Panc1 (cell line): ENCODE measurements at regions of chr17 and their contacts with region 1.

Region 1: GRCh38 chr17:21126645-21127510 is at the start of gene DHRS7B:
- DNase-seq: peak; percentile 66
- ATAC-seq: peak; percentile 98
- H3K4me3 ChIP-seq: peak within 1 kb of the TSS; percentile 82
- H3K27ac ChIP-seq: peak within 1 kb of the TSS; percentile 90
- H3K4me1 ChIP-seq: peaks cover 12% of the 10 kb centered on the region
- H3K27me3 ChIP-seq: no peaks in the 10 kb centered on the region
- CTCF ChIP-seq: no peak
- total RNA-seq, gene DHRS7B: 9.4 TPM

Region 2: GRCh38 chr17:20992987-20993862 is 133.7 kb before region 1 on chr17:
- CTCF ChIA-PET with region 1: no interaction called
- POLR2A ChIA-PET with region 1: no interaction called
- in situ Hi-C with region 1: no loop called
- intact Hi-C with region 1: no loop called
- DNase-seq: peak; percentile 35
- ATAC-seq: no peak
- H3K4me3 ChIP-seq: no peak overlapping the region
- H3K27ac ChIP-seq: no peak overlapping the region
- H3K4me1 ChIP-seq: no peaks in the 10 kb centered on the region
- H3K27me3 ChIP-seq: no peaks in the 10 kb centered on the region
- CTCF ChIP-seq: peak; percentile 93

Region 3: GRCh38 chr17:21029032-21029431 is 97.8 kb before region 1 on chr17:
- CTCF ChIA-PET with region 1: interaction called, 17 read pairs
- POLR2A ChIA-PET with region 1: no interaction called
- in situ Hi-C with region 1: no loop called
- intact Hi-C with region 1: no loop called
- DNase-seq: no peak
- ATAC-seq: no peak
- H3K4me3 ChIP-seq: no peak overlapping the region
- H3K27ac ChIP-seq: no peak overlapping the region
- H3K4me1 ChIP-seq: peaks cover 16% of the 10 kb centered on the region
- H3K27me3 ChIP-seq: no peaks in the 10 kb centered on the region
- CTCF ChIP-seq: no peak

Region 4: DNA sequence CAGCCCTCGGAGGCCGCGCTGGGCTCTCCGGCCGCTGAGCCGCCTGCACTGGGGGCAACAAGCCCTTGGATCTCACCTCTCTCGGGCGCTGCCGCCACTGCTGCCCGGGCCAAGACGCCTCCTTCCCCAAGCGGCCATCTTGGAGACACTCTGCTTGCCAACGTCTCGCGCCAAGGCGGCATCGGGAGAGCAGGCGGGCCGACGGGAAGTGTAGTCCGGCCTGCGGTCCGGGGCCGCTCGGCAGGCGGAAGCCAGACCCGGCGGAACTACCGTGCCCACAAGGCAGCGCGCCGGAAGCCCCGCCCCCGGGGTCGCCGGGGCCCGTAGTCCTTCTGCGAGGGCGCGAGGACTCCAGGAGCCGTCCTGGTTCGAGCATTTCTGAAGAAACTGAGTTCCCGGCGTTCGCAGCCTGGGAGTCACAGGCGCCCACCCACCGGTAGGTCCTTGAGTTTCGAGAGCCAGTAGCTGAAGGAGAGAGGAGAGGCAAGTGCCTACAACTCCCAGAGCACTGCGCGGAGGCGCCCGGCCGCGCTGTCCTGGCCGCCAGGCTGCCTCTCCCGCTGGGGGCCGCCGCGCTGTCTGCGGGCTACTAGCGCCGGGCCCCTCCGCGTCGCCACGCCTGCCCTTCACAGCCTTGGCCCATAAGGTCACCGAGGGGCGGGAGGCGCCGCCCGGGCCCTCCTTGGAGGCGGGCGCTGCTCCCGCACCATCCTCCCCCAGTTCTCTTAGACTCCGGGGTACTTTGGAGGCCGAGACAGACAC is 87.3 kb after region 1 on chr17 and contains the start of gene TMEM11:
- CTCF ChIA-PET with region 1: interaction called, 4 read pairs
- POLR2A ChIA-PET with region 1: no interaction called
- in situ Hi-C with region 1: no loop called
- intact Hi-C with region 1: loop called (anchors 10 kb)
- DNase-seq: peak; percentile 38
- ATAC-seq: peak; percentile 94
- H3K4me3 ChIP-seq: peak within 1 kb of the TSS; percentile 81 to 93
- H3K27ac ChIP-seq: peak within 1 kb of the TSS; percentile 92
- H3K4me1 ChIP-seq: peaks cover 15% of the 10 kb centered on the region
- H3K27me3 ChIP-seq: no peaks in the 10 kb centered on the region
- CTCF ChIP-seq: no peak
- total RNA-seq, gene TMEM11: 23.4 TPM

Region 5: GRCh38 chr17:21284319-21285163 is 157.7 kb after region 1 on chr17 and contains the start of gene MAP2K3:
- CTCF ChIA-PET with region 1: interaction called, 7 read pairs
- POLR2A ChIA-PET with region 1: no interaction called
- in situ Hi-C with region 1: no loop called
- intact Hi-C with region 1: loop called (anchors 10 kb)
- DNase-seq: peak; percentile 85
- ATAC-seq: peak; percentile 83
- H3K4me3 ChIP-seq: peak within 1 kb of the TSS; percentile 65 to 75
- H3K27ac ChIP-seq: peak within 1 kb of the TSS; percentile 90
- H3K4me1 ChIP-seq: peaks cover 37% of the 10 kb centered on the region
- H3K27me3 ChIP-seq: no peaks in the 10 kb centered on the region
- CTCF ChIP-seq: no peak
- total RNA-seq, gene MAP2K3: 44.4 TPM

Region 6: GRCh38 chr17:21511363-21512198 is 384.7 kb after region 1 on chr17:
- CTCF ChIA-PET with region 1: interaction called, 11 read pairs
- POLR2A ChIA-PET with region 1: no interaction called
- in situ Hi-C with region 1: no loop called
- intact Hi-C with region 1: no loop called
- DNase-seq: peak; percentile 38
- ATAC-seq: peak; percentile 97
- H3K4me3 ChIP-seq: peak overlapping the region; percentile 47 to 50
- H3K27ac ChIP-seq: peak overlapping the region; percentile 39; the same call in 1 of the 2 replicates
- H3K4me1 ChIP-seq: no peaks in the 10 kb centered on the region
- H3K27me3 ChIP-seq: no peaks in the 10 kb centered on the region
- CTCF ChIP-seq: peak; percentile 92